HEK293 (cell line): ENCODE measurements at regions of chr15 and their contacts with region 1.

Region 1: DNA sequence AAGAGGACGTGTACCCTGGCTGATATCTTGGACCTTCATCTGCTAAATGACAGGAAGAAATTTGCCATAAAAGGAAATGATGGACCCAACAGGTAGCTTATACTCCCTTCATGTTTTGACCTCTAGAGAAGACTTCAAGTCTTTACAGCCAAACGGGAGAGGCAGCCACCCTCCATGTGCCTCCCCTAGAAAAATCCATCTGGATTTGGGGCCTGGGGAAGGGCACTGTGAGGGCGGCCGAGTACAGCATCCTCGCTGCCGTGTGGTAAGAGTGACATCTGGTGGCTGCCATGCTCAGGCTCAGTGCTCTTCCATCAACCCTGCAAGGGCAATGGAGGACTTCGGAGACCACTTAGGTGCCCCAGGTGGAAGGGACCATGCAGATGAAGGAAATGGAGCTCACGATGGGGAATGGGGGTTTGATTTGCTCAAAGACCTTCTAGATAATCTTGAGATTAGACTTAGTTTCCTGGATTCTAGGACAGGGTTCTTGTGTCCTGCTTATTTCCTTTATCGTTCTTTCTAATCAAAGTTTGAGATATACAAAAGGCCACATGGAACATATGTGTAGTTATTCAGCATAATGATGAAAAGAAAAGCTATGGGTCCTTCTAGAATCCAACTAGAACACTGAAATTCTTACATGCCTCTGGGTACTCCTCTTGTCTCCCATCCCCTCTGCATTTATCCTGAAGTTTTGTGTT is 44.4 kb downstream of the AQP9 start:
- H3K4me3 ChIP-seq: no peak overlapping the region
- H3K27ac ChIP-seq: no peak overlapping the region
- H3K4me1 ChIP-seq: no peaks in the 10 kb centered on the region
- CTCF ChIP-seq: peak; percentile 89

Region 2: GRCh38 chr15:57751177-57751800 is 431.3 kb before region 1 on chr15:
- CTCF ChIA-PET with region 1: interaction called, 10 read pairs
- POLR2A ChIA-PET with region 1: no interaction called
- H3K4me3 ChIP-seq: no peak overlapping the region
- H3K27ac ChIP-seq: no peak overlapping the region
- H3K4me1 ChIP-seq: peaks cover 4% of the 10 kb centered on the region; the same call in 1 of the 2 replicates
- CTCF ChIP-seq: no peak

Region 3: DNA sequence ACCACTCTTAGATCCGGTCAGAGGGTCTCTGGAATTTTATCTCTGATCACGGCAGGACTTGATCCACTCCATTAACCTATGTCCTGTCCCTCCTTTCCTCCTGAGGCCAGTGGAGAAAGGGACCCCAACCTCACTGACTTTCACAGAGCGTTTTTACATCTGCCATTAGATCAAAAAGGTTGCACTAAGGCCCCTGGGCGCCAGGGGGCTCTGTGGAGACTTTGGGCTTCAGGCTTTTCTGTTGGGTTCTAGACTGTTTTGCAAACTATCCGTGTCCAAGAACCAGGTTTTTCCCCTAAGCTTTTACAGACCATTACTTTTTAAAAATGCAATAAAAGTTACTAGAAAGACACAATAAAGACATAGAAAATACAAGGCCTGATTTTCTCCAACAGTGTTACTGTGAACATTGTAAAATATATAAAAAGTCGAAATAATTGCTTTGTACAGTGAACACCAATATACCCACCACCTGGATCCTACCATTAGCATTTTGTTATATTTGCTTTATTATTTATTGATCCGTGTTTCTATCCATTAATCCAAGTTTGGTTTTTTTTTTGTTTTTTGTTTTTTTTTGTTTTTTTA is 316.4 kb before region 1 on chr15:
- CTCF ChIA-PET with region 1: interaction called, 19 read pairs
- POLR2A ChIA-PET with region 1: no interaction called
- H3K4me3 ChIP-seq: no peak overlapping the region
- H3K27ac ChIP-seq: no peak overlapping the region
- H3K4me1 ChIP-seq: no peaks in the 10 kb centered on the region
- CTCF ChIP-seq: no peak

Region 4: GRCh38 chr15:58077427-58077826 is 105.2 kb before region 1 on chr15:
- CTCF ChIA-PET with region 1: interaction called, 43 read pairs
- POLR2A ChIA-PET with region 1: no interaction called
- H3K4me3 ChIP-seq: no peak overlapping the region
- H3K27ac ChIP-seq: no peak overlapping the region
- H3K4me1 ChIP-seq: no peaks in the 10 kb centered on the region
- CTCF ChIP-seq: 0 out of 2 replicates have a peak, but pooled peaks have one; percentile 41

Region 5: DNA sequence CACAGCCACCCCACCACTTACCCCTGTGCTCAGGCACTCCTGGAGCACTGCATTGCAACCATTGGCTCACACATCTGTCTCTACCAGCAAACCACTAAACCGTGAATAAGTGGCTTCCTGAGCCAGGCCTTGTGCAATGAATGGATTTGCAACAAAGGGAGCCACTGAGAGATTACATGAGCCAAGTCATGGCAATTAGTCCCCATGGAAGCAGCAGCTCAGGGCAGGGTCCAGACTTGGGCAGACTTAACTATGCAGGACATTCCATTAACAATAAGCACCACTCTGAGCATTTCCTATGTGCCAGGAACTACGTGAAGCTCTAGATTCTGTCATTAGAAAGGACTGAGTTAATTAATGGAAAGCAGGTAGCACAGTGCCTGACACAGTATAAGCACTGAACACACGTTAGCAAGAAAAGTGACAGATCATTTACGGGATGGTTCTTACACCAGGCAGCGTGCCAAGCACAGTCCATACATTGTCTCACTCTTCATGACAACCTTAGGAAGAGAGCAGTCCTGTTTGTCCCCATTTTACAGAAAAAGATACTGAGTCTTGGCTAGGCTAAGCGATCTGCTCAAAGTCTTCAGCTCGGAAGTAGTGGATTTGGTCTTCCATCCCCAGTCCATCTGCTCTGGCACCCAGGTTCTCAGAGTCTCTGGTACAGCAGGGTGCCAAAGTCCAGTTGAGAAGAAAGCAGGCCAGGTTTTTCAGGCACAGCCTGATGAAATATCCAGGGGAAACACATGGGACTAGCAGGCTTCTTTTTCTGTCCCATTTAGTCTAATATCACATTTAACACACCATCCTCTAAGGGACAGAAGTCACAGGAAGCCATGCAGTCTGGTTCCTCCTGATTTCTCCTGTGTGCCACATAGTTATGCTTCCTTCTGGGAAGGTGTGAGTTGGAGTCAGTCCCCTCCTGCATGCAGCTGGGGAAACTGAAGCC is 293.2 kb after region 1 on chr15:
- CTCF ChIA-PET with region 1: no interaction called
- POLR2A ChIA-PET with region 1: no interaction called
- H3K4me3 ChIP-seq: no peak overlapping the region
- H3K27ac ChIP-seq: no peak overlapping the region
- H3K4me1 ChIP-seq: no peaks in the 10 kb centered on the region
- CTCF ChIP-seq: no peak